BJ (cell line): ENCODE measurements at regions of chr11 and their contacts with region 1.

Region 1: GRCh38 chr11:76734456-76735420 is 48.4 kb upstream of the TSKU start:
- DNase-seq: no peak
- H3K4me3 ChIP-seq: no peak overlapping the region
- H3K27me3 ChIP-seq: peaks cover 7% of the 10 kb centered on the region
- CTCF ChIP-seq: no peak

Region 2: DNA sequence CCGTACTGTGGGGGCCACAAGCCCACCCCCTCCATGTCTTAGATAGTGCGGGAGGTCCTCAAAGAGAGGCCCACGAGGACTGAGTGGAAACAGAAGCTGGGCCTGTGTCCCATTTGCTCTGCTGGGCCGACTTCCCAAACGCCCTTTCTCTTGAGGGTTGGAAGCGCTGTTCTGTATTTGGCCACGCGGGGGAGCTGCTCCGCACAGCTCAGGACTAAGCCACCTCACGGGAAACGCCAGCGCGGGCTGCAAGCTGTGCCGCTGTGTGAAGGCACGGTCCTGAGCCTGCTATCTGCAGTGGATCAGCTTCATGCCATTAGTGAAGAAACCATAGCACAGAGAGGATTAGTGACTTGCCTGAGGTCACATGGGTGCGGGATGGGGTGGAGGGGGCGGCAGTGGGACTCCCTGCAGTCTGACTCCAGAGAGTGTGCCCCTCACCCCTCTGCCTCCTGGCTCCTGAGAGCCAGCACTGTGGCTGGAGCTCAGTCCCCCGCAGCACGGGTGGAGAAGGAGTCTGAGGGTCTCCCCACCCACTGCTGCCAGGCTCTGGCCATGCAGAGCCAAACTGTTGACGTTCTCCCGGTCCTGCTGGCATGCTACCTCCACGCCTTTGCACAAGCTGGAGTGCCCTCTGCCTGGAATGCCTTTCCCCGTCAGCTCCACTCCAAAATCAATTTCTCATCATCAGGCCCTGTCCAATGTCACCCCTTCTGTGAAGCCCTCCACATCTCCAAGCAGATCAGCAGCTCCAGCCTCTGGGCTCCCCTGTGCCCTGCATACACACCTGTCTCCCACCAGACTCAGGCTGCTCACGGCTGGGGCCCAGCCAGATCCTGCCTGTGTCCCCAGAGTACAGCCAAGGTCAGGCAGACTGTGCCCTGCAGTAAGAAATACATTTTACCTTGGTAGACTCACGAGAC is 12.7 kb before region 1 on chr11:
- CTCF ChIA-PET with region 1: interaction called, 68 read pairs
- POLR2A ChIA-PET with region 1: no interaction called
- DNase-seq: no peak
- H3K4me3 ChIP-seq: no peak overlapping the region
- H3K27me3 ChIP-seq: peaks cover 13% of the 10 kb centered on the region
- CTCF ChIP-seq: peak; percentile 97

Region 3: GRCh38 chr11:76788661-76789439 is 54.1 kb after region 1 on chr11:
- CTCF ChIA-PET with region 1: interaction called, 10 read pairs
- POLR2A ChIA-PET with region 1: no interaction called
- DNase-seq: no peak
- H3K4me3 ChIP-seq: no peak overlapping the region
- H3K27me3 ChIP-seq: no peaks in the 10 kb centered on the region
- CTCF ChIP-seq: no peak

Region 4: GRCh38 chr11:76844511-76844910 is 109.8 kb after region 1 on chr11:
- CTCF ChIA-PET with region 1: no interaction called
- POLR2A ChIA-PET with region 1: no interaction called
- DNase-seq: no peak
- H3K4me3 ChIP-seq: no peak overlapping the region
- H3K27me3 ChIP-seq: peaks cover 8% of the 10 kb centered on the region
- CTCF ChIP-seq: no peak